Activated naive CD4-positive, alpha-beta T cell treated with anti-CD3 and anti-CD28 coated beads, Interleukin-2, amount 10 ng/mL, durations not matched to agents 7 days and 5 days (primary cell): ENCODE measurements at regions of chr15 and their contacts with region 1.

Region 1: DNA sequence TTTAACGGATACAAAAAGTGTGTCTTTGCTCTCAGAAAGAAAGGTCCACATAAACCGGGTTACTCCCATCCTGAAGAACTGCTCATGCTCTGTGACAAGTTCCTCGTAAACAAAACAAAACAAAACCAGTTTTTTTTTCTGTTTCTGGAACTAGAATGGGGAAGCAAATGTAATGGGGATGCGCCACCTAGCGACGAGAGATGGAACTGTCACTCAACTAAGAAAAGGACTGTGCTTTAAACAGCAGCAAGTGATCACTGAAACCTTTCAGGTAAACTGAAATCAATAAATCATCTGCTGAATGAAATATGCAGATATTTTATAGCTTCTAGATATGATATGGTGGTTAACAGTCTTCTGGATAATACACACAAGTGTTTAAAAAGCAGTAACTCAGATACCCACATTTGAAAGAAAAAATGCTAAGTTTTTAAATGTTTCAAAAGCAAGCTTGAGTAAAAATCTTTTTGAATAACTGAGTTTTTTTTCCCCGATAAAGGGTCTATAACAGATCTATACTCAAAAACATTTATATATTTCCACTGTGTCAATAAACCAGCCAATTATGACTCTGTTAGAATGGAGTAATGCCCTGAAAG is 10.9 kb downstream of the TM2D3 start:
- DNase-seq: peak; percentile 88
- H3K4me3 Mint-ChIP-seq: no peak overlapping the region
- H3K27ac Mint-ChIP-seq: peak overlapping the region; percentile 89
- H3K4me1 Mint-ChIP-seq: peaks cover 28% of the 10 kb centered on the region
- H3K27me3 Mint-ChIP-seq: no peaks in the 10 kb centered on the region

Region 2: GRCh38 chr15:101288908-101289513 is 352.3 kb before region 1 on chr15:
- CTCF ChIA-PET with region 1: interaction called, 31 read pairs
- DNase-seq: no peak
- H3K4me3 Mint-ChIP-seq: no peak overlapping the region
- H3K27ac Mint-ChIP-seq: peak overlapping the region; percentile 50
- H3K4me1 Mint-ChIP-seq: peaks cover 54% of the 10 kb centered on the region
- H3K27me3 Mint-ChIP-seq: no peaks in the 10 kb centered on the region

Region 3: DNA sequence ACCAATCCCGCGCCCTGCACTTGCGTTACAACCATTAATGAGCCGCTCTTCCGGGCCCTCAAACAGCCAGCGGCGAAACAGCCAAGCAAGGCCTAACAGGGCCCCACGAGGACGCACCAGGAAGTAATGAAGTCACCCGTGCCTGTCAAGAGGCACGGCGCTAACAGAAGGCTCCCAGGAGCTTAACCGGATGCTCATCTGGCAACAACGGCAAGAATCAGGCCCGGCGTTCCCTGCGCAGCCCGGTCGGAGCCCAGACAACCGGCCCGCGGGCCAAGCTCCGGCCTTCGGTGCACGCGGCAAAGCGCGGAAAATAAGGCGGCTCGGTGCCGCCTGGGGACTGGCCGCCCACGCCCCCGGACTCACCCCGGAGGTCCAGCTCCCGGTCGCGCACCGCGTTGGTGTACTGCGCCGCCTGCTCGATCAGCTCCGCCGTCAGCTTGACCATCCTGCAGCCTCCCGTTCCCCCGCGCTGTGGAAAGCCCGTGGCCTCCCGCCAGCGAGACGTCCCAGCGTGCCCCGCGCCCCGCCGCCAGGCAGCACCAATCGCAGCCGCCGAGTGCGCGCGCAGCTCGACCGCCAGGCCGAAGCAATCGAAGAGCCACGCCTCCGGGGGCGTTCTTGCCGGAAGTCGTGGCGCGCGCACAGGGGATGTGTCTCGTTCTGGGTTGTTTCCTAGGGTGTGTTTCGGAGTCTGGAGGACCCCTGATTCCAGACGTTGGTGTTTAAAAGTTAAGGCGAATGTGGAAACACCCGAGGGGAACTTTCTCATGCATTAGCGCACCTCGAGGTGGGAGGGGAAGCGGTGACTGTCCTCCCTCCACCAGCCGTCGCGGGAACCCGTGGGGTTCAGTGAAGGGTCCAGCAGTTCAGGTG is 346.3 kb before region 1 on chr15 and contains the start of gene SNRPA1:
- CTCF ChIA-PET with region 1: interaction called, 35 read pairs
- DNase-seq: peak; percentile 98
- H3K4me3 Mint-ChIP-seq: peak within 1 kb of the TSS; percentile 87
- H3K27ac Mint-ChIP-seq: peak within 1 kb of the TSS; percentile 91
- H3K4me1 Mint-ChIP-seq: peaks cover 45% of the 10 kb centered on the region
- H3K27me3 Mint-ChIP-seq: no peaks in the 10 kb centered on the region

Region 4: GRCh38 chr15:101307048-101307896 is 334.0 kb before region 1 on chr15:
- CTCF ChIA-PET with region 1: interaction called, 35 read pairs
- DNase-seq: no peak
- H3K4me3 Mint-ChIP-seq: no peak overlapping the region
- H3K27ac Mint-ChIP-seq: no peak overlapping the region
- H3K4me1 Mint-ChIP-seq: no peaks in the 10 kb centered on the region
- H3K27me3 Mint-ChIP-seq: peaks cover 9% of the 10 kb centered on the region

Region 5: DNA sequence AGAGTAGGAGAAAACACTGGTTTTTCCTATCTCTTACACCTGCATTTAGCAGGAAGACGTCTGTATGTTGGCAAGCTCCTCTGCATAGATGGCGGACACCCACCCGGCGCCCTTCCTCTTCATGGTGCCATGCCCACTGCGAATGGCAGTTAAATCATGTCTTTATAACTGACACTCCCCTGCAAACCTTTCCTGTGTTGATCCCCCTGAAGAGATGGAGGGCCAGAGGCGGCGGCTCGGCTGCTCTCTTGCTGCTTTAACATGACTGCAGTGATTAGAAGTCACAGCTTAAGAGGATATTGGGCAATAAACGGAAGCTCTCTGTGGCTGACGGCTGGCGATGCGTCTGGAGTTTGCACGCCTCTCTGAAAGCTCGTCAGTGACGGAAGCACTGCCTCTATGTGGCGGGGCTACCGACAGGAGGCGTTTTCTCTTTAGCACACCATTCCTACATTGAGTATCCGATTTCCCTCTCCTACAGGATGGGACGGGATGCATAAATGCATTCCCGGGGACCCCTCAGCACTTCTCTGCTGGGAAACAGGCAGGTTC is 320.7 kb before region 1 on chr15:
- CTCF ChIA-PET with region 1: interaction called, 27 read pairs
- DNase-seq: peak; percentile 83
- H3K4me3 Mint-ChIP-seq: peak overlapping the region; percentile 58
- H3K27ac Mint-ChIP-seq: peak overlapping the region; percentile 89
- H3K4me1 Mint-ChIP-seq: peaks cover 20% of the 10 kb centered on the region
- H3K27me3 Mint-ChIP-seq: peaks cover 9% of the 10 kb centered on the region

Region 6: DNA sequence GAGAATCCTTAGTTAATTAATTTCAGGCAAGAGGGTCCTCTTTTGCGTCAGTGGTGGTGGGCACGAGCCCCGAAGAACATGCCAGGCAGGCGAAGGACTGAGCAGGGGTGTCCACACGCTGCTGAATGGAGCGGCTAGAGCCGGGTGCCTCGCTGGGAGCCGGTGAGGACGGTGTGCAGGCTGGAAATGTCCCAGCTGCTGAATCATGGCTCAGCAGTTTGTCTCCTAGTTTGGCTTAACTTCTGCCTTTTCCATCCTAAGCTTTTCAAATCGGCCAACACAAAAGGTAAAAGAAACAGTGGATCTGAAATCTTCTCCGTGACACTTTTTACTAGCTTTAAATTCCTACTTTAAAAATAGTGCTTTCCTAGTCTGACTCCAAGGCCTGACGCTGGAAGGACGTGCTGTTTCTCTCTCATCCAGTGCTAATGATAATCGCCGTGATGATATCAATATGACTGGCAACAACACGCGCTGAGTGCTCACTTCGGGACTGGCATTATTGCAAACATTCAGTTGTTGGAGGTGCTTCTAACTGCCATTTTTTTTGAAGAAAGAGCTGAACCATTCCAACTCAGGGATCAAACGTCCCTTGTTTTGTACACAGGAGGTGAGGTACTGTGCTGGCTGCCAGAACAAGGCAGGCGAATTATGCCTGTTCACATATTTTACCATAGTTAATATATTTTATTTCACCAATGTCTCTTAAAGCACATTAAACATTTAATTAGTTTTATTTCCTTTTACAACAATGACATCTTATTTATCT is 171.6 kb before region 1 on chr15:
- CTCF ChIA-PET with region 1: no interaction called
- DNase-seq: no peak
- H3K4me3 Mint-ChIP-seq: no peak overlapping the region
- H3K27ac Mint-ChIP-seq: no peak overlapping the region
- H3K4me1 Mint-ChIP-seq: peaks cover 3% of the 10 kb centered on the region
- H3K27me3 Mint-ChIP-seq: peaks cover 37% of the 10 kb centered on the region

Region 7: DNA sequence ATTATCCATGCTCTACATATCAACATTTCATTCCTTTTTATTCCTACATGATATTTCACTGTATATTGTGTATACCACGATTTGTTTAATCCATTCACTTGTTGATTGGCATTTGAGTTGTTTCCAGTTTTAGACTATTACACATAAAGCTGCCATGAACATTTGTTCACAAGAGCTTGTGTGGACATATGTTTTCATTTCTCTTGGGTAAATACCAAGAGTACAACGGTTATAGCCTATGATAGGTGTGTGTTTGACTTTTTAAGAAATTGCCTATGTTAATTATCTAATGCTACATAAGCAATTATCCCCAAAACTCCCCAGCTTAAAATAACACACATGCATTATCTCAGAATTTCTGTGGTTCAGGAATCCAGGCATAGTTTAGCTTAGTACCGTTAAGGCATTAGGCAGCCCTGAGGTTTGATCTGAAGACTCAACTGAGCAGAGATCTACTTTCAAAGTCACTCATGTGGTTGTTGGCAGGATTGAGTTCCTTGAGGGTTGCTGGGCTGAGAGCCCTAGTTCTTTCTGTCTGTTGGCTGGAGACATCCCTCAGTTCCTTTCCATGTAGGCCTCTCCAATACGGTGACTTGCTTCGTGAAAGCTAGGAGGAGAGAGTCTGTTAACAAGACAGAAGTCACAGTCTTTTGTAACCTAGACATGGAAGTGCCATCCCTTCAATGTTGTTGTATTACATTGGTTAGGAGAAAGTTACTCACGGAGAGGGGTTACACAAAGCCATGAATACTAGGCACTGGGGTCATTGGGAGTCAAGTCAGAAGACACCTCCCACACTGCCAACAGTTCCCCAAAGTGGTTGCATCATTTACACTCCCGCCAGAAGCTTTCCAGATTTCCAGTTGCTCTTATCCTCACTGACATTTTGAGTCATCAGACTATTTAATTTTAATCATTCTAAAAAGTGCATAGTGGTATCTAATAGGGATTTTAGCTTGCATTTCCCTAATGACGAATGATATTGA is 130.8 kb before region 1 on chr15:
- CTCF ChIA-PET with region 1: no interaction called
- DNase-seq: no peak
- H3K4me3 Mint-ChIP-seq: no peak overlapping the region
- H3K27ac Mint-ChIP-seq: no peak overlapping the region
- H3K4me1 Mint-ChIP-seq: no peaks in the 10 kb centered on the region
- H3K27me3 Mint-ChIP-seq: peaks cover 17% of the 10 kb centered on the region